Activated T-helper 2 cell treated with anti-CD3 and anti-CD28 coated beads, Interferon-gamma antibody, Interleukin-2, Interleukin-4, amounts not matched to agents 10 μg/mL and 5 μg/mL and 100 μg/mL, durations not matched to agents 14 hours and 24 hours and 36 hours (primary cell): ENCODE measurements at regions of chr5 and their contacts with region 1.

Region 1: GRCh38 chr5:149551200-149552037 is at the start of gene CSNK1A1:
- DNase-seq: peak; percentile 99
- H3K4me3 Mint-ChIP-seq: peak within 1 kb of the TSS; percentile 96
- H3K27ac Mint-ChIP-seq: peak within 1 kb of the TSS; percentile 100
- H3K4me1 Mint-ChIP-seq: peaks cover 20% of the 10 kb centered on the region
- H3K27me3 Mint-ChIP-seq: no peaks in the 10 kb centered on the region
- total RNA-seq, gene CSNK1A1: 176 and 194 TPM in 2 replicates

Region 2: GRCh38 chr5:148620696-148621095 is 930.7 kb before region 1 on chr5:
- intact Hi-C with region 1: no loop called
- DNase-seq: peak; percentile 40
- H3K4me3 Mint-ChIP-seq: no peak overlapping the region
- H3K27ac Mint-ChIP-seq: no peak overlapping the region
- H3K4me1 Mint-ChIP-seq: peaks cover 35% of the 10 kb centered on the region
- H3K27me3 Mint-ChIP-seq: peaks cover 34% of the 10 kb centered on the region

Region 3: DNA sequence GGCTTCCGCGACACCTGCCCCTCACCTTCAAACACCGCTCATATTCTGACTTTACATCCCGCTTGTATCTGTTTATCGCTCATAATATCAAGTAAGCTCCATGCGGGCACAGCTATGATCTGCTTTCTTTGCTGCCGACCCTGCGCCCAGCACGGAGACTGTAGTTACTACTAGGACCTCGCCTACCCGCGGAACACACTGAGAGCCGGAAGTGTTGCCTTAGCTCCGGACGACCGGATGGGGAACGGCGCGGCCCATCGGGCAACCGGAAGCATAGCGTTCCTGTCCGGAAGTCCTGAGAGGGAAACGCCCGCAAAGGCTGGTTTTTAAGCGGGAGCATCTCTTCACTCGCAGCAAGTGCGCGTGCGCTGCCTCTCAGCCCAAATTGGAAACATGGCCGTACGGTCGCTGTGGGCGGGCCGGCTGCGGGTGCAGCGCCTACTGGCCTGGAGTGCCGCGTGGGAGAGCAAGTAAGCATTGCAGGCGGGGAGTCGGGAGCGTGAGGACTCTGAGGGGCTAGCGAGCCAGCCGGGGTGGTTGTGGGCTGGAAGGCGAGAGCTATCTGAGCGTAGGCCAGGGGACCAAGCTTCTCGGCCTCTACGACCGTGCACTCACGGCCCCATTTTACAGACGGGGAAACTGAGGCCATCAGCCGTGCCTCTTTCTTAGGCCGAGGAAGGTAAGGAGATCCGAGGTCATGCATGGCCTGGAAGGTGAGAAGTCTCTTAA is 206.1 kb before region 1 on chr5 and contains the start of gene GRPEL2:
- intact Hi-C with region 1: loop called (anchors 1 kb)
- DNase-seq: peak; percentile 88
- H3K4me3 Mint-ChIP-seq: peak within 1 kb of the TSS; percentile 98
- H3K27ac Mint-ChIP-seq: peak within 1 kb of the TSS; percentile 94
- H3K4me1 Mint-ChIP-seq: peaks cover 42% of the 10 kb centered on the region
- H3K27me3 Mint-ChIP-seq: peaks cover 1% of the 10 kb centered on the region
- total RNA-seq, gene GRPEL2: 22.5 TPM in 2 replicates

Region 4: DNA sequence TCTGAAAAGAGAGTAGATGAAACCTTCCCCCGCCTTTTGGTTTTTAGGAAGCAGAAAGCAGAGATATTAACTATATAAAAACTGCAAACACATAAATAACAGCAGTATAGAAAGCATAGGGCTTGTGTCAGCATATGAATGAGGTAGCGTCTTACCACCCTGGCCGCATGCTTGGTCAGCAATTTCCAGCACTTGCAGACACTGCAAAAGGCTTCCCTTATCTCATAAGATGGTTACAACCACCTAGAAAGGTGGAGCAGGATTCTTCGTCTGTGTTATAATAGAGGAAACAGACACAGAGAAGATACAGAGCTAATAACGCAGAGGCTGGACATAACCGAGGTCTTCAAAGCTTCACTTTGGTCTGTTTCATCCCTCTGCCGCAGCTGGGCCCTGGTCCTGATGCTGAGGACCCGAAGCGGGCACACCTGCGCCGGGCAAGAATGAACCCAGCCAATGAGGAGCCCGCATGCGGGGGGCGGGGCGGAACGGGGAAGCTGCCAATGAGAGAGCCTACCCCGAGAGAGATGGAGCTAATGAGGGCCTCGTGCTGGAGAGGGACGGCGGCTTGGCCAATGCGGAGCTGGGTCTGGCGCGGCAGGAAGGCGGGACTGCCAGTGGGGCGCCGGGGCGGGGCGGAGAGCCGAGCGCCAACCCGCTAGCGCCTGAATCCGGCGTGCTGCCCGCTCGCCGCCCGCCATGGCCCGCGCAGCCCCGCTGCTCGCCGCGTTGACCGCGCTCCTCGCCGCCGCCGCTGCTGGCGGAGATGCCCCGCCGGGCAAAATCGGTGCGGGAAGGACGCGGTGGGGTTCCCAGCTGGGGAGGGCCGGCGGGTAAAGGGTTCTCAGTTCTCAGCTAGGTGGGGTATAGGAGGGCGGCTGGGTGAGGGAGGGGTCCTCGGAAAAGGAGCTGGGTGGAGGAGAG is 193.8 kb before region 1 on chr5 and contains the start of gene PCYOX1L:
- intact Hi-C with region 1: loop called (anchors 2 kb)
- DNase-seq: peak; percentile 97
- H3K4me3 Mint-ChIP-seq: peak within 1 kb of the TSS; percentile 94
- H3K27ac Mint-ChIP-seq: peak within 1 kb of the TSS; percentile 81
- H3K4me1 Mint-ChIP-seq: peaks cover 63% of the 10 kb centered on the region
- H3K27me3 Mint-ChIP-seq: no peaks in the 10 kb centered on the region
- total RNA-seq, gene PCYOX1L: 16.6 and 17.8 TPM in 2 replicates

Region 5: GRCh38 chr5:149500922-149501582 is 50.4 kb before region 1 on chr5:
- intact Hi-C with region 1: loop called (anchors 5 kb)
- DNase-seq: no peak
- H3K4me3 Mint-ChIP-seq: no peak overlapping the region
- H3K27ac Mint-ChIP-seq: no peak overlapping the region
- H3K4me1 Mint-ChIP-seq: no peaks in the 10 kb centered on the region
- H3K27me3 Mint-ChIP-seq: no peaks in the 10 kb centered on the region

Region 6: DNA sequence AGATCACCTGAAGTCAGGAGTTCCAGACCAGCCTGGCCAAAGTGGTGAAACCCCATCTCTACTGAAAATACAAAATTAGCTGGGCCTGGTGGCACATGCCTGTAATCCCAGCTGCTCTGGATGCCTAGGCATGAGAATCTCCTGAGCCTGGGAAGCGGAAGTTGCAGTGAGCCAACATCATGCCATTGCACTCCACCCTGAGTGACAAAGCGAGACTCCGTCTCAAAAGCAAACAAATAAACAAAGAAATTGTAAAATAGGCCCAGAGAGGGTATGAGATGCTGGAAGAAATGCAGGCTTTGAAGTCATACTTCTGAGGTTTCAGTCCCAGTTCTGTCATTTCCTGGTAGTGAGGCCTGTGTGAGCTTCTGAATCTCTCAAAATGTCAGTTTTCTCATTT is 24.6 kb after region 1 on chr5:
- intact Hi-C with region 1: loop called (anchors 1 kb)
- DNase-seq: no peak
- H3K4me3 Mint-ChIP-seq: no peak overlapping the region
- H3K27ac Mint-ChIP-seq: peak overlapping the region; percentile 91
- H3K4me1 Mint-ChIP-seq: peaks cover 20% of the 10 kb centered on the region
- H3K27me3 Mint-ChIP-seq: no peaks in the 10 kb centered on the region